ENCODE measurements at regions of chr3 and their contacts with region 1.

Region 1: DNA sequence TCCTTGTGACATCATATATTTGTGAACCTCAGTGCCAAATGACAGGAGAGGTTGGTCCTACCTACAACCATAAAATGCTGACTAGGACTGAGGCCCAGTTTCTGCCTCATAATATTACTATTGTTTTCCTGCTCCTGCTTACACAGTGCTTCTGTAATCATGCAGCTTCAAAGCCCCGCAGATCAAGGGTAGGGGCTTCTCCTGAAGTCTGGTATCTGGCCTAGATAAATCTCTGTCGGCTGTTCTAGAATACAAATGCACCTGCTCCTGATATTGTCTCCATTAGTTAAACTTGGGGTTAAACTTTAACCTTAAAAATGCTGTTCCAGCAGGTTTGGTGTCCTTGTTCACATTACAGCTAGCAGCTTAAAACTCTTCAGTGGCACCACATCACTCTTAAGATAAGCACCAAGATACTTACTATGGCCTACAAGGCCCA is 552.4 kb downstream of the TUSC7 start:
- DNase-seq: peak; percentile 84 to 85
- H3K4me3 ChIP-seq: no peak overlapping the region
- H3K4me3 Mint-ChIP-seq: peak overlapping the region; percentile 1
- H3K27ac Mint-ChIP-seq: peak overlapping the region; percentile 17
- H3K4me1 ChIP-seq: peaks cover 34% of the 10 kb centered on the region
- H3K4me1 Mint-ChIP-seq: peaks cover 7% of the 10 kb centered on the region
- H3K27me3 ChIP-seq: no peaks in the 10 kb centered on the region
- H3K27me3 Mint-ChIP-seq: no peaks in the 10 kb centered on the region
- CTCF ChIP-seq: no peak

Region 2: GRCh38 chr3:116464276-116464798 is 797.7 kb before region 1 on chr3:
- CTCF ChIA-PET with region 1: no interaction called
- POLR2A ChIA-PET with region 1: no interaction called
- intact Hi-C with region 1: no loop called
- DNase-seq: no peak
- H3K4me3 ChIP-seq: no peak overlapping the region
- H3K4me3 Mint-ChIP-seq: no peak overlapping the region
- H3K27ac Mint-ChIP-seq: no peak overlapping the region
- H3K4me1 ChIP-seq: no peaks in the 10 kb centered on the region
- H3K4me1 Mint-ChIP-seq: no peaks in the 10 kb centered on the region
- H3K27me3 ChIP-seq: no peaks in the 10 kb centered on the region
- H3K27me3 Mint-ChIP-seq: no peaks in the 10 kb centered on the region
- CTCF ChIP-seq: no peak

Region 3: DNA sequence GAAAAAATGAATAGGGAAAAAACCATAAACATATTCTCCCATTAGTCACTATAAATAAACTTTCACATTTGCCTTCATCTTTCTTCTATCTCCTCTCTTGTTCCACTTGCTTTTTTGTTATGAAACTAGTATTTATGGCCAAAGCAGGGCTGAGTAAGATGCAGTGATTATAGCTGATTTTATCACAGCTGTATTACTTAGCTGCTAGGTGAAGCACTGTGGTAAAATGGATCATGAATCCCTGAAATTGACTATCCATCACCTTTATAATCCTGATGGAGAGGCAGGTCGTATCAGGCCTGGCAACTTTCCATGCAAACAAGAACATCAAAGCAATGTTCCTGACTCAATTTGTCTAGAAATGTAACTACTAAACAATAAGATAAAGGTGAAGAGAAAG is 80.8 kb before region 1 on chr3:
- CTCF ChIA-PET with region 1: no interaction called
- POLR2A ChIA-PET with region 1: no interaction called
- intact Hi-C with region 1: no loop called
- DNase-seq: no peak
- H3K4me3 ChIP-seq: no peak overlapping the region
- H3K4me3 Mint-ChIP-seq: no peak overlapping the region
- H3K27ac Mint-ChIP-seq: no peak overlapping the region
- H3K4me1 ChIP-seq: no peaks in the 10 kb centered on the region
- H3K4me1 Mint-ChIP-seq: no peaks in the 10 kb centered on the region
- H3K27me3 ChIP-seq: no peaks in the 10 kb centered on the region
- H3K27me3 Mint-ChIP-seq: peaks cover 6% of the 10 kb centered on the region
- CTCF ChIP-seq: no peak

Region 4: GRCh38 chr3:117278424-117279190 is 16.6 kb after region 1 on chr3:
- CTCF ChIA-PET with region 1: no interaction called
- POLR2A ChIA-PET with region 1: interaction called, 5 read pairs
- intact Hi-C with region 1: loop called (anchors 1 kb)
- DNase-seq: peak; percentile 40 to 46
- H3K4me3 ChIP-seq: no peak overlapping the region
- H3K4me3 Mint-ChIP-seq: no peak overlapping the region
- H3K27ac Mint-ChIP-seq: peak overlapping the region; percentile 8
- H3K4me1 ChIP-seq: peaks cover 11% of the 10 kb centered on the region; the same call in 1 of the 2 replicates
- H3K4me1 Mint-ChIP-seq: peaks cover 15% of the 10 kb centered on the region
- H3K27me3 ChIP-seq: no peaks in the 10 kb centered on the region
- H3K27me3 Mint-ChIP-seq: peaks cover 2% of the 10 kb centered on the region
- CTCF ChIP-seq: no peak

Region 5: DNA sequence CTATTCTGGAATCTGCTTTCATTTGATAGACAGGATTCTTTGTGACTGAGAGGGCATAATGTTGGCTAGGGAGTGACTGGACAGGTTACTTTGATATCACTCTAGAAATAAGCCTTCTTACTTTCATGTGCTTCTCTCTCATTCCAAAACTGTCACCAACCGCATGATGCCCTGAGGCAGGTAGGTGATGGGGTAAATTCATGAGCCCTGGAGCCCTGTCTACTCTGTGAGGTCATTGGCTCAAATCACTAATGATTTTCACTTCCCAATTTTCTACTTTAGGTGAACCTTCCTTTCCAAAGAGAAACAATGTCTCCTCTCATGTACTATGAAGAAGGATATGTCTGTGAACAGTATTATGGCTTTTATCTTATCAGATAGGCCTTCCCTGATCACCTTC is 44.3 kb after region 1 on chr3:
- CTCF ChIA-PET with region 1: no interaction called
- POLR2A ChIA-PET with region 1: no interaction called
- intact Hi-C with region 1: no loop called
- DNase-seq: no peak
- H3K4me3 ChIP-seq: no peak overlapping the region
- H3K4me3 Mint-ChIP-seq: no peak overlapping the region
- H3K27ac Mint-ChIP-seq: no peak overlapping the region
- H3K4me1 ChIP-seq: peaks cover 10% of the 10 kb centered on the region; the same call in 1 of the 2 replicates
- H3K4me1 Mint-ChIP-seq: no peaks in the 10 kb centered on the region
- H3K27me3 ChIP-seq: no peaks in the 10 kb centered on the region
- H3K27me3 Mint-ChIP-seq: no peaks in the 10 kb centered on the region
- CTCF ChIP-seq: no peak